ENCODE measurements at regions of chr5 and their contacts with region 1.

Region 1: GRCh38 chr5:137641148-137641547 is 94.7 kb downstream of the KLHL3 start:
- DNase-seq: no peak
- H3K4me3 ChIP-seq: no peak overlapping the region
- H3K27ac ChIP-seq: no peak overlapping the region
- H3K4me1 ChIP-seq: peaks cover 0 to 2% (median 0%) of the 10 kb centered on the region in 4 experiments
- H3K27me3 ChIP-seq: no peaks in the 10 kb centered on the region

Region 2: DNA sequence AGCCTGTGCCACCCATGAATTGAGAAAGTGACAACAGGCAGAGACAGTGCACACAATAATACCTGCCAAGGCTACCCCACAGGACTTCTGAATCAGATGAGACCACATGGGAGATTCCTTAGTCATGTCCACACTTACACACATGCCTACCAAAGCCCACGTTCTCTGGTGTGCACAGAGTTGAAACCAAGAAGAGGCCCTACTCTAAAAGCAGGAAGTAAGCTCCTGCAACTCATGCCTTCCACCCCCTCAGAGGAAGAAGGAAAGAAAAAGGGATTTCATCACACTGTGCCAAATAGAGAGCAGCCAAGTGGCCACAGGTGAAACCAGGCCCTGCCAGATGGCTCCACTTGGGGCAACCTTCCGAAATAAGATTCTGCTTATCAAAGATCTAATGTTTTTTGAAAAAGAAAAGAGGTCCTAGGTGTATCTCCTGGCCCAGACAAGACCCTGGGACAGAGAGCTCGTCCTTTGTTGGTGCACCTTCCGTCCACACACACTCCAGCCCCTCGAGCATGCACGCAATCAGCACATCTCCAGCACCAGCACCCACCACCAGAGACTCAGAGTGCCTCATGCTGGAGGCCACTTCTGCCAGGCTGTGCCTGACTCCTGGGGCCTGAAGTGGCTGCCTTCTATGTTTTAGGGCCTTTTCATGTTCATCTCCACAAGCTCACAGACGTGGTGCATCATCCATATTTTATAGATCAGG is 27.4 kb before region 1 on chr5:
- CTCF ChIA-PET with region 1: no interaction called
- POLR2A ChIA-PET with region 1: no interaction called
- DNase-seq: peak in 2 of 3 donors; percentile 52 to 55
- H3K4me3 ChIP-seq: no peak overlapping the region
- H3K27ac ChIP-seq: no peak overlapping the region
- H3K4me1 ChIP-seq: peaks cover 0 to 14% (median 10%) of the 10 kb centered on the region in 4 experiments
- H3K27me3 ChIP-seq: no peaks in the 10 kb centered on the region

Region 3: GRCh38 chr5:137629646-137630045 is 11.5 kb before region 1 on chr5:
- CTCF ChIA-PET with region 1: interaction called, 20 read pairs
- POLR2A ChIA-PET with region 1: no interaction called
- DNase-seq: peak; percentile 52 to 78 (median 72)
- H3K4me3 ChIP-seq: peak overlapping the region in 1 of 7 experiments; percentile 67
- H3K27ac ChIP-seq: no peak overlapping the region
- H3K4me1 ChIP-seq: peaks cover 0 to 10% (median 5%) of the 10 kb centered on the region in 4 experiments
- H3K27me3 ChIP-seq: no peaks in the 10 kb centered on the region

Measured in common myeloid progenitor, CD34-positive (primary cell).